ENCODE measurements at regions of chr19 and their contacts with region 1.

Region 1: GRCh38 chr19:40662921-40663694 is 27.3 kb downstream of the NUMBL start:
- DNase-seq: peak; percentile 84
- ATAC-seq: peak; percentile 84
- H3K4me3 ChIP-seq: peak overlapping the region; percentile 57
- H3K27ac ChIP-seq: peak overlapping the region; percentile 96
- H3K4me1 ChIP-seq: peaks cover 6% of the 10 kb centered on the region
- H3K27me3 ChIP-seq: no peaks in the 10 kb centered on the region
- CTCF ChIP-seq: peak; percentile 96
- POLR2A ChIP-seq: peak; percentile 50; the same call in 1 of the 2 replicates
- RAD21 ChIP-seq: peak; percentile 93

Region 2: DNA sequence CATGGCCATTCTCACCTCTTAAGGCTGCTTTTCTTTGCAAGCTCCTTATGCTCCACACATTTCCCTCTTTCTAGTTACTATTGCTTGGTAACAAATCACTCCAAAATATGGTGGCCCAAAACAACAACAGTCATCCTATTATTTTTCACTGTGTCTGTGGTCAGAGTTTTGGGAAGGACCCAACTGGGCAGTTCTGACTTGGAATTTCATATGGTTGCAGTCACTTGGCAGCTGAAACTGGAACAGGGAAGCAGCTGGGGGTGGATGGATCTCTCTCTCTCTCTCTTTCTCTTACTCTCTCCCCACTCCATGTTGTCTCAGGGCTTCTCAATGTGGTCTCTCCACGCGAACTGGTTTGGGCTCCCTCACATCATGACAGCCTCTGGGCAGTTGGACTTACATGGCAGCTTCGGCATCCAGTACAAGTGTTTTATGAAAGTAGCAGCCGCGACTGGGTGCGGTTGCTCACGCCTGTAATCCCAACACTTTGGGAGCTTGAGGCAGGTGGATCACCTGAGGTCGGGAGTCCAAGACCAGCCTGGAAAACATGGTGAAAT is 12.3 kb before region 1 on chr19:
- CTCF ChIA-PET with region 1: interaction called, 10 read pairs
- POLR2A ChIA-PET with region 1: interaction called, 4 read pairs
- dilution Hi-C with region 1: no loop called
- in situ Hi-C with region 1: no loop called
- intact Hi-C with region 1: no loop called
- DNase-seq: peak; percentile 74
- ATAC-seq: peak; percentile 3; the same call in 1 of the 2 replicates
- H3K4me3 ChIP-seq: no peak overlapping the region
- H3K27ac ChIP-seq: peak overlapping the region; percentile 79; the same call in 1 of the 2 replicates
- H3K4me1 ChIP-seq: peaks cover 10% of the 10 kb centered on the region
- H3K27me3 ChIP-seq: no peaks in the 10 kb centered on the region
- CTCF ChIP-seq: no peak
- POLR2A ChIP-seq: no peak
- RAD21 ChIP-seq: no peak

Region 3: GRCh38 chr19:40702337-40703012 is 39.4 kb after region 1 on chr19:
- CTCF ChIA-PET with region 1: interaction called, 5 read pairs
- POLR2A ChIA-PET with region 1: no interaction called
- dilution Hi-C with region 1: no loop called
- in situ Hi-C with region 1: no loop called
- intact Hi-C with region 1: loop called (anchors 1 kb)
- DNase-seq: no peak
- ATAC-seq: peak; percentile 86
- H3K4me3 ChIP-seq: no peak overlapping the region
- H3K27ac ChIP-seq: no peak overlapping the region
- H3K4me1 ChIP-seq: no peaks in the 10 kb centered on the region
- H3K27me3 ChIP-seq: no peaks in the 10 kb centered on the region
- CTCF ChIP-seq: peak; percentile 51
- POLR2A ChIP-seq: no peak
- RAD21 ChIP-seq: peak; percentile 51

Region 4: GRCh38 chr19:40716655-40717324 is 53.7 kb after region 1 on chr19 and contains the starts of genes COQ8B and ITPKC:
- CTCF ChIA-PET with region 1: no interaction called
- POLR2A ChIA-PET with region 1: no interaction called
- dilution Hi-C with region 1: no loop called
- in situ Hi-C with region 1: no loop called
- intact Hi-C with region 1: loop called (anchors 2 kb)
- DNase-seq: peak; percentile 96
- ATAC-seq: peak; percentile 75
- H3K4me3 ChIP-seq: peak within 1 kb of the TSS; percentile 86
- H3K27ac ChIP-seq: peak within 1 kb of the TSS; percentile 96
- H3K4me1 ChIP-seq: peaks cover 9% of the 10 kb centered on the region
- H3K27me3 ChIP-seq: no peaks in the 10 kb centered on the region
- CTCF ChIP-seq: 0 out of 2 replicates have a peak, but pooled peaks have one; percentile 8
- POLR2A ChIP-seq: peak; percentile 83
- RAD21 ChIP-seq: no peak
- total RNA-seq, gene COQ8B: 14.2 and 14.9 TPM in 2 replicates
- total RNA-seq, gene ITPKC: 7.7 and 8.6 TPM in 2 replicates

Region 5: DNA sequence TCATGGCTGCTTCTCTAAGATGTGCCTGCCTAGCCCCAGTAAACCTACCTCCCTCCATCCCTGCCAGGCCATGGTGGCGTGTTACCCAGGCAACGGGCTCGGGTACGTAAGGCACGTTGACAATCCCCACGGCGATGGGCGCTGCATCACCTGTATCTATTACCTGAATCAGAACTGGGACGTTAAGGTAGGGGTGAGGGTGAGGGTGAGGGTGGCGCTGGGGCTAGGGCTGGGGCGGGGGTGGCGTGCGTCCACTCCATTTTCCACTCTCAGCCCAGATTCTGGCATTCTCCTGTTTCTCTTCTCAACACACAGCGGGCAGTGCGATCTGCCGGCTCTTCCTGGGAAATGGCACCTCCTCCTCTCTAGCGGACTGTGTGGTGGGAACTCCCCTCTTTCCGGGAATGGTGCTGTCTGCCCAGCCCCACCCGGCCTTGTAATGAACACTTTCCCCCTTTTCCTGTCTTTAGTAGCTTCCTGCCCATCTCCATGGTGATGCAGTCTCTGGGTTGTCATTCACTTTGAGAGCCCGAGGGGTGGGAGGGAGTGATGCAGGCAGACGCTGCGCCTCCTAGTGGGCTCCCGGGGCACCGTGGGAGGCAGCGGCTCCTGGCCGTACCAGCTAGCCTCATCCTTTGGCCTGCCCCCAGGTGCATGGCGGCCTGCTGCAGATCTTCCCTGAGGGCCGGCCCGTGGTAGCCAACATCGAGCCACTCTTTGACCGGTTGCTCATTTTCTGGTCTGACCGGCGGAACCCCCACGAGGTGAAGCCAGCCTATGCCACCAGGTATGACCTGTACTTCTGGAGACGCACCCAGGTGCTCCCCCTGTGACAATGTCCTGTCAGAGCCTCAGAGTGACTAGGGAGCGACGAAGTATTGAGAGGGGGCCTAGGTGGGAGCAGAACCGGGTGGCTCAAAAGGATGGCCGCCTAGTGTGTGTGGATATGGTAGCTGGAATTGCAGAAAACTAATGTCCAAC is 143.7 kb after region 1 on chr19:
- CTCF ChIA-PET with region 1: no interaction called
- POLR2A ChIA-PET with region 1: interaction called, 4 read pairs
- dilution Hi-C with region 1: no loop called
- in situ Hi-C with region 1: loop called (anchors 5 kb)
- intact Hi-C with region 1: loop called (anchors 5 kb)
- DNase-seq: peak; percentile 95
- ATAC-seq: peak; percentile 48
- H3K4me3 ChIP-seq: no peak overlapping the region
- H3K27ac ChIP-seq: no peak overlapping the region
- H3K4me1 ChIP-seq: peaks cover 27% of the 10 kb centered on the region
- H3K27me3 ChIP-seq: no peaks in the 10 kb centered on the region
- CTCF ChIP-seq: peak; percentile 92
- POLR2A ChIP-seq: no peak
- RAD21 ChIP-seq: peak; percentile 61

Region 6: DNA sequence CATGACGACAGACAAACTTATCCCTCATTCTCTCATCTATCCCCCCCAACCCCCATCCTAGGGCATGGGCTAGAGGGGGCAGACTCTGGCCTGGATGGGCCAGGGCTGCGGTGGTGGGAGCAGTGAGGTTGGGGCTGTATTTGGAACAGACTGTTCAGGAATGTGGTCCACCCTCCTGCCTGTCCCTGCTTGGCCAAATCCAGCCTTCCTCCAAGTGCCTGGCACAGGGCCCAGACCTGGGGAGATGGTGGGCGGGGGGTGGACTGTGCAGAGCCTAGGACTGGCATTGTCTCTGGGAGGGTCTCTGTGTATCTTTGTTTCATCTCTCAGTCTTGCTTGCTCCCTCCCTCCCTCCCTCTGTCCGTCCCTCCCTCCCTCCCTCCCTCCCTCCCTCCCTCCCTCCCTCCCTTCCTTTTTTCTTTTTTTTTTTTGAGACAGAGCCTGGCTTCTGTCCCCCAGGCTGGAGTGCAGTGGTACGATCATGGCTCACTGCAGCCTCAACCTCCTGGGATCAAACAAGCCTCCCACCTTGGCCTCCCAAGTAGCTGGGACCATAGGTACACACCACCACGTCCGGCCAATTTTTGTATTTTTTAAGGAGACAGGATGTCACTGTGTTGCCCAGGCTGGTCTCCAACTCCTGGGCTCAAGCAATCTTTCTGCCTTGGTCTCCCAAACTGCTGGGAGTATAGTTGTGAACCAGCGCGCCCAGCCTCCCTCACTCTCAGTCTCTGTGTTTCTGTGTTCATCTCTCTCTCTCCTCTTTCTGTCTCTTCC is 150.3 kb after region 1 on chr19:
- CTCF ChIA-PET with region 1: interaction called, 10 read pairs
- POLR2A ChIA-PET with region 1: no interaction called
- dilution Hi-C with region 1: no loop called
- in situ Hi-C with region 1: loop called (anchors 5 kb)
- intact Hi-C with region 1: loop called (anchors 5 kb)
- DNase-seq: no peak
- ATAC-seq: no peak
- H3K4me3 ChIP-seq: no peak overlapping the region
- H3K27ac ChIP-seq: no peak overlapping the region
- H3K4me1 ChIP-seq: peaks cover 9% of the 10 kb centered on the region
- H3K27me3 ChIP-seq: no peaks in the 10 kb centered on the region
- CTCF ChIP-seq: no peak
- POLR2A ChIP-seq: no peak
- RAD21 ChIP-seq: no peak

Region 7: DNA sequence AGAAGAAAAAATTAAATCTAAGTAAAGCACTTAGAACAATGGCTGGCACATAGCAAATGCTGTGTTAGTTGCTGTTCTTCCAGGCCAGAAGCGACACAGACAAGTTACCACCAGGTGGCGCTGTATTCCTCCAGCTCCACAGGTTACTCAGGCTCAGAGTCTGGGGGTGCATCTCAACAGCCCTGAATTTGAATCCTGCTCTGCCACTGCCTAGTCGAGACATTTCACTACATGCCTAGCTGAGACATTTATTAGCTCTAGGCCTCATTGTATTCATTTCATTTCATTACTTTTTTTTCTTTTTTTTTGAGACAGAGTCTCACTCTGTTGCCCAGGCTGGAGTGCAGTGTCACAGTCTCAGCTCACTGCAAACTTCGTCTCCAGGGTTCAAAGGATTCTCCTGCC is 311.5 kb after region 1 on chr19:
- CTCF ChIA-PET with region 1: interaction called, 3 read pairs
- POLR2A ChIA-PET with region 1: no interaction called
- dilution Hi-C with region 1: no loop called
- in situ Hi-C with region 1: no loop called
- intact Hi-C with region 1: loop called (anchors 5 kb)
- DNase-seq: peak; percentile 73
- ATAC-seq: peak; percentile 82
- H3K4me3 ChIP-seq: no peak overlapping the region
- H3K27ac ChIP-seq: no peak overlapping the region
- H3K4me1 ChIP-seq: no peaks in the 10 kb centered on the region
- H3K27me3 ChIP-seq: no peaks in the 10 kb centered on the region; the same call in 1 of the 2 replicates
- CTCF ChIP-seq: peak; percentile 66
- POLR2A ChIP-seq: no peak
- RAD21 ChIP-seq: peak; percentile 66